BJ (cell line): ENCODE measurements at regions of chr2 and their contacts with region 1.

Region 1: GRCh38 chr2:63053081-63053888 is 2.7 kb downstream of the OTX1 start:
- DNase-seq: no peak
- H3K4me3 ChIP-seq: no peak overlapping the region
- H3K27me3 ChIP-seq: peaks cover 42% of the 10 kb centered on the region
- CTCF ChIP-seq: no peak

Region 2: GRCh38 chr2:62895632-62896009 is 157.7 kb before region 1 on chr2:
- CTCF ChIA-PET with region 1: no interaction called
- POLR2A ChIA-PET with region 1: interaction called, 10 read pairs
- DNase-seq: no peak
- H3K4me3 ChIP-seq: no peak overlapping the region
- H3K27me3 ChIP-seq: no peaks in the 10 kb centered on the region
- CTCF ChIP-seq: no peak